PC-9 (cell line): ENCODE measurements at regions of chr1 and their contacts with region 1.

Region 1: GRCh38 chr1:24857507-24858133 is 72.5 kb downstream of the RUNX3 start:
- DNase-seq: no peak
- H3K4me3 ChIP-seq: no peak overlapping the region
- H3K27ac ChIP-seq: no peak overlapping the region
- H3K4me1 ChIP-seq: peaks cover 3% of the 10 kb centered on the region; the same call in 1 of the 2 replicates
- H3K27me3 ChIP-seq: no peaks in the 10 kb centered on the region
- CTCF ChIP-seq: no peak

Region 2: DNA sequence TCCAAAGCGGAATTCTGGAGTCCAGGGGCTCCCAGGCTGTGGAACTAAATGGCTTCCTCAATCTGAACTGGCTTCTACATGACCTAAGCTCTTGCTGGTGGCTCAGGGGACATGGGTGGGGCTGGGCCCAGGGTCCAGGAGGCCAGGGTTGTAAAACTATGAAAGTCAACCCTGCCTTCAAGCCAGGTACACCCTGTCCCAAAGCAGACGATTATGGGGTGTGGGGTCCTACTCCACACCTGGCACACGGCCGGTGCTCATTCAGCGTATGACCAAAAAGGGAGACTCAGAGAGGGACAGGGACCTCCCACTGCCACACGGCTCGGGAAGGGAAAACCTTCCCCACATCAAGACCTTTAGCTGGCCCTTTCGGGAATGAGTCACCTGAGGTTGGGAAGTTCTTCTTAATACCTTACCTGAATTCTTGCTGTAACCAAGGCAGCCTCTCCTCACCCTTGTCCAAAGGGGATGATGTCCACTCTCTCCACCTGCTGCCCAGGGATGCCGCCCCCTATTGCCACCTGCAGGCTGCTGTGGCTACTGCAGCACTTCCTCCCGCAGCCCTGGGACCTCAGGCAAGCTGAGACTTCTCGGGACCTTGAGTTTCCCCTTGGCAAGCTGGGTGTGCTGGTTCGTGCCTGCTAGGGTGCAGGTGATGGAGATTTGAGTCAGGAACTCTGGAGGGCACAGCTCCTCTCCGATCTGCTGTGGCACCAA is 40.3 kb after region 1 on chr1:
- CTCF ChIA-PET with region 1: interaction called, 6 read pairs
- POLR2A ChIA-PET with region 1: no interaction called
- intact Hi-C with region 1: loop called (anchors 2 kb)
- DNase-seq: peak in 1 of 2 experiments; percentile 56
- H3K4me3 ChIP-seq: no peak overlapping the region
- H3K27ac ChIP-seq: no peak overlapping the region
- H3K4me1 ChIP-seq: no peaks in the 10 kb centered on the region
- H3K27me3 ChIP-seq: peaks cover 36% of the 10 kb centered on the region
- CTCF ChIP-seq: peak; percentile 70

Region 3: GRCh38 chr1:25216123-25216522 is 358.5 kb after region 1 on chr1:
- CTCF ChIA-PET with region 1: no interaction called
- POLR2A ChIA-PET with region 1: interaction called, 10 read pairs
- intact Hi-C with region 1: no loop called
- DNase-seq: no peak
- H3K4me3 ChIP-seq: no peak overlapping the region
- H3K27ac ChIP-seq: no peak overlapping the region
- H3K4me1 ChIP-seq: no peaks in the 10 kb centered on the region
- H3K27me3 ChIP-seq: no peaks in the 10 kb centered on the region
- CTCF ChIP-seq: no peak